Sigmoid colon (tissue), 7 donors: ENCODE measurements at regions of chr3 and their contacts with region 1.

Region 1: DNA sequence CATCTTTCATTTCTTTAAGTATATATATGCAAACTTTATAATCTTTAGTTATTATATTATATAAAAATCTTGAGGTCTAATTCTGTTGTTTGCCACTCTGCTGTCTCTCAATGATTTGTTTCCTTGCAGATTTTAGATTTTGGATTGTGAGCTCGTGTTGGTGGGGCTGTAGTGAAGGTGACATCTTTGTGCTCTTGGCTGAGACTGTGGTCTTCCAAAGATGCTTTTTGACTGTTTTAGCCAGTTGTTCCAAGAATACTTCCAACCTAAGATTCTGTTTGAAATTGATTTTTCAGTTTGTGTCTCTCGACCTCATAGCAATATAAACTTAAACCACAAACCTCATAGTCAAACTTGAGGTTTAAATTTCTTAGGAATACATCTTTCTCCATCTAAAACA is 326.5 kb downstream of the SLC9A9 start:
- DNase-seq: no peak
- H3K4me3 ChIP-seq: no peak overlapping the region
- H3K27ac ChIP-seq: no peak overlapping the region
- H3K4me1 ChIP-seq: peaks cover 0 to 4% (median 0%) of the 10 kb centered on the region in 4 donors
- H3K27me3 ChIP-seq: no peaks in the 10 kb centered on the region
- CTCF ChIP-seq: no peak
- EP300 ChIP-seq: no peak
- POLR2A ChIP-seq: no peak

Region 2: GRCh38 chr3:143380449-143380848 is 141.4 kb before region 1 on chr3:
- intact Hi-C with region 1: no loop called
- DNase-seq: no peak
- H3K4me3 ChIP-seq: no peak overlapping the region
- H3K27ac ChIP-seq: no peak overlapping the region
- H3K4me1 ChIP-seq: no peaks in the 10 kb centered on the region
- H3K27me3 ChIP-seq: no peaks in the 10 kb centered on the region
- CTCF ChIP-seq: no peak
- EP300 ChIP-seq: no peak
- POLR2A ChIP-seq: no peak

Region 3: GRCh38 chr3:143476965-143477640 is 44.7 kb before region 1 on chr3:
- intact Hi-C with region 1: loop called (anchors 2 kb)
- DNase-seq: no peak
- H3K4me3 ChIP-seq: no peak overlapping the region
- H3K27ac ChIP-seq: no peak overlapping the region
- H3K4me1 ChIP-seq: no peaks in the 10 kb centered on the region
- H3K27me3 ChIP-seq: no peaks in the 10 kb centered on the region
- CTCF ChIP-seq: no peak
- EP300 ChIP-seq: no peak
- POLR2A ChIP-seq: no peak